ENCODE measurements at regions of chr12 and their contacts with region 1.

Region 1: DNA sequence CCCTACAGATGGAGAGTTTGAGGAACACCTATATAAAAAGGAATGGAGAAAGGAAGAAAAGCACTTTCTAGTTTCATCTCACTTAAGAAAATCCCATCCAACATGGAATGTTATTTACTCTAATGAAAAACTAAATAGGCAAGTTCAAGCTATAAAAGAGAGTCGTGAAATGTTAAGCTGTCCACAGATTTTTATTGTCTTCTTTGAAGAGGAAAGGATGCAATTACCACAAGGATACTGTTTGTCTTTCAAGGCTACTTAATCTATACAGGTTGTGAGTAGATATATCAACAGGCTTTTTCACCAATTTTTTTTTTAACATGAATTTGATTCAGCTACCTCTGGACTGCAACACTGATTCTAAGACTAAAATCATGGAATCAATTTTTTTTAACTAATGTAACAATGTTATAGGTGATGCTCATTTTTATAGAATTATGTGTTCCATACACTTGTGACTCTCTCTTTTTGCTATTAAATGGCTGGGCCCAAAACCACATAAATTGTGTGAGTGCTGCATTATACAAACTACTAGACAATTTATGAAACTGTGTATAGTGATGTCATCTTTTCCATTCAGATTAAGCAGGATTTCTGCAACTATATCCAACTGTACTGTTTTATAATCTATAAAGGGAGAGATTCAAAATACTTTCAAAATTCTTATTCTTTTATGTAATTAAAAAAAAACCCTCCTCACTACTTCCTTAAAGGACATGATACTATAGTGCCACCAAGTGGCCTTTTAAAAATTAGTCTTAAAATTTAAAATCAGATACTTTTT is 26.8 kb upstream of the BMAL2 start:
- DNase-seq: no peak

Region 2: DNA sequence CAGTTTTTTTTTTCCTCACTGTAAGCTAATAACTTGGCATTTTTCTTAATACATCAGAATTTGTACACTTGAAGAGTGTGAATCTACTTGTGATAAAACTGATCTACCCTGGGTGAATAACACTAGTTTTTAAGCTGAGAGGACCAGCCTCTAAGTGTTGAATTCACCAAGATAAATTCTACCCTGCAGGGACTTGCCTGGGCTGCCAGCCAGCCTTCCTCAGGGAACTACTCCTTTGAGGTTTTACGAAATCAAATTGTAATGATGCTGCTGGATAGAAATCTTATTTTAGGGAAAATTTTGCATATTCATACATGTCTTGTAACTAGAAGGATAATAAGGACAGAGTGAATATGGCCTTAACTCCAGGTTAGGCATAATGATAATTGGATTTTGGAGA is 281.6 kb before region 1 on chr12:
- intact Hi-C with region 1: loop called (anchors 5 kb)
- DNase-seq: no peak

Region 3: DNA sequence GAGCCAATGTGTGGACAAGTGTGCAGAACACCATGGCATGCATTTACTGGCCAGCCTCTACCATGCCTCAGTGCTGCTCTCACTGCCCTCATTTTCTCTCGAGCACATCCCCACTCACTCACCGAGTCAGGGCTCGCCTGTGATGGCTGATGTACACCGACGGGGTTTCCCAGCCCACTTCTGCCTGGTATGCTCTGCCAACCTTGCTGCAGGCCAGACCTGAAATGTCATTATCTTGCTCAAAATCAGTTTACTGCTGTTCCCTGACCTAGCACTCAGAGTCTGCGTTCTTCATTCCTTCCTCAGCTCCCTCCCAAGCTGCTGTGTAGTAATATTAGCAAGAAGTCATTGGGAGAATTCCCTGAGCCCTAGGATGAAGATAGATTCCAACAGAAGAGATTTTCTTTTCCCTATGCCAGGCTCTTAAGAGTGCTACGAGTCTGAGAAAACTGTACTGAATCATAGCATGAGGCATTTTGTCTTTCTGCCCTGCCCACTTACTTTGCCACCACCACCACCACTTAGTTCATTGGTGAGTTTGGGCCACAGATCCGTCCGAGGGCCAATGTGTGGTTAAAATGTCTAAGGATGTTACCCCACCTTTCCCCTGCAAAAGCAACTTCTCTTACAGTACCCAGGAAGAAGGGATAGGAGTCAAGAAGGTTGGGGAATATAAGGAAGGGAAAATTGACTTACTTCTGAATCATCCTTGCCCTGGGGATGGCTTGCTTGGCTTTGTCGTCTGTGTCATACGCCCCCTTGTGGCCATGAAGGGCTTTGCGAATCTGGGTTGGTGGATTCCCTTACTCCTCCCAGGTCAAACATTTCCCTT is 77.8 kb after region 1 on chr12:
- intact Hi-C with region 1: no loop called
- DNase-seq: no peak

Region 4: DNA sequence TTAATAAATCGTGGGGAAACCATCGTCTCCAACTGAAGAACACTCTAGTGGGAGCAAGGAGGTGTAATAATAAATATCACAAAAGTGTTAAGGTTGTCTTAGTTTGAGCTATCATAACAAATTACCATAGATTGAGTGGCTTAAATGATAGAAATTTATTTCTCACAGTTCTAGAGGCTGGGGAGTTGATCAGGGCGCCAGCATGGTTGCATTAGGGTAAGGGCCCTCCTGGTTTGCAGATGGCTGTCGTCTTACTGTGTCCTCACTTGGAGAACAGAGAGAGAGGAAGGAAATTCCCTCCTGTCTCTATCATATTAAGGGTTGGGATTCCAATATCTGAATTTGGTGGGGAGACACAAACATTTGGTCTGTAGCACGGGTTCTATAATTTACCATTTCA is 437.7 kb after region 1 on chr12:
- intact Hi-C with region 1: no loop called
- DNase-seq: no peak

Measured in cardiac septum (tissue), 1 donor.